ENCODE measurements at regions of chr20 and their contacts with region 1.

Region 1: GRCh38 chr20:34771680-34772081 is 53.8 kb downstream of the NCOA6 start:
- DNase-seq: no peak
- ATAC-seq: no peak

Region 2: DNA sequence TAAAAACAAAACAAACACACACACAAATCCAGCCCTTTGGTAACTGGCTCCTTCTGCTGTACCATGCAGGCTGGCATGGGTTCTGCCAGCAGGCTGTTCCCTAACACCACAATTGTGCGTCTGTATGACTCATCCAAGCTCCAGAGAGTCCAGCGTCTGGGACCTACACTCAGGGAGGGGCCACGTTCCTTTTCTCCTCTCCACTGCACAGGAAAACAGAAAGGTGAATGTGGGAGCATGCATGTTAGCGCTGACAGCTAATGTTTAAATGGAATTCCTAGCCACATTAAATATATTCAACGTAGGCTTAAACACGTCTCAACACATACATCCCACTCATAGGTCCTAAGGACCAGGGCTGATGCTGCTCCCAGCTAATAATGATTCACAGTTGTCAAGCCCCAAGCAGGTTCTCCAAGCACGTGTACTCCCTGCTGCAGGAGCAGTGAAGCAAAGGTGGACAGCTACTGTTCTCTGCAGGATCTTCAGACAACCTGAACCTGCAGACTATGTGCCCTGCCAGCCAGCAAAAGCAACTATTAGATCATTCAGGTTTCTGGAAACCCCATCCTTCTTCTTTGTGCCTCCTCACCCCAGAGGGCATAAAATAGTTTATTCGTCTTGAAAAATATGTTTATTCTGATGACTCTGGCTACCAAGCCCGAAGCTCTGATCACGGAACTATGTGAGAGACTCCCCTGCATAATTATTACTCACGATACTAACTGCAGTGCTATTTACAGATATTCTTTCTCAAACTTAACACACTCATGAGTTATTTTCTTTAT is 192.3 kb before region 1 on chr20:
- intact Hi-C with region 1: loop called (anchors 2 kb)
- DNase-seq: peak; percentile 82
- ATAC-seq: peak; percentile 88